ENCODE measurements at regions of chr5 and their contacts with region 1.

Region 1: GRCh38 chr5:74945561-74946165 is 79.5 kb upstream of the FAM169A start:
- DNase-seq: no peak
- H3K4me3 ChIP-seq: no peak overlapping the region
- H3K4me3 Mint-ChIP-seq: no peak overlapping the region
- H3K27ac Mint-ChIP-seq: no peak overlapping the region
- H3K4me1 ChIP-seq: peaks cover 74% of the 10 kb centered on the region
- H3K4me1 Mint-ChIP-seq: peaks cover 58% of the 10 kb centered on the region
- H3K27me3 ChIP-seq: no peaks in the 10 kb centered on the region
- H3K27me3 Mint-ChIP-seq: no peaks in the 10 kb centered on the region
- CTCF ChIP-seq: no peak

Region 2: GRCh38 chr5:74673011-74673790 is 272.5 kb before region 1 on chr5:
- CTCF ChIA-PET with region 1: no interaction called
- POLR2A ChIA-PET with region 1: no interaction called
- intact Hi-C with region 1: loop called (anchors 2 kb)
- DNase-seq: peak in 1 of 2 experiments; percentile 30
- H3K4me3 ChIP-seq: no peak overlapping the region
- H3K4me3 Mint-ChIP-seq: no peak overlapping the region
- H3K27ac Mint-ChIP-seq: no peak overlapping the region
- H3K4me1 ChIP-seq: no peaks in the 10 kb centered on the region; the same call in 1 of the 2 replicates
- H3K4me1 Mint-ChIP-seq: peaks cover 18% of the 10 kb centered on the region
- H3K27me3 ChIP-seq: no peaks in the 10 kb centered on the region
- H3K27me3 Mint-ChIP-seq: no peaks in the 10 kb centered on the region
- CTCF ChIP-seq: peak; percentile 21 to 29

Region 3: DNA sequence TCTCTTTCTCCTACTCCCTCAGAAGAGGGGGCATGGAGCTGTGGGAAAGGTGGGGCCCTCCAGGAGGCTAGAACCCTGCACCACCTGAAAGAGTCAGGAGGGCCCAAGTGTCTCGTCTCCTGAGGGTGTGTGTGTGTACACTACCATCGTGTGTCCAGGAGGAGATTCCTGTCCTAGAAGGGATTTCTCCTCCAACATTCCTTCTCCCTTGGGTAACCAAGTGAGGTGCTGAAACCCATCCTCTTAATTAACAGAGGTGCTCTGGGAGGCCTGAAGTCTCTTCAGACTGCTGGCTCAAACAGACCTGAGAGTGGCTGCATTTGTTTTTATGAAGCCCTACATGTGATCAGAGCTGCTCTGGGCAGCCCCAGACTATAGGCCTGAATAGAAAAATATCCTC is 18.3 kb before region 1 on chr5:
- CTCF ChIA-PET with region 1: interaction called, 6 read pairs
- POLR2A ChIA-PET with region 1: no interaction called
- intact Hi-C with region 1: loop called (anchors 1 kb)
- DNase-seq: no peak
- H3K4me3 ChIP-seq: no peak overlapping the region
- H3K4me3 Mint-ChIP-seq: no peak overlapping the region
- H3K27ac Mint-ChIP-seq: no peak overlapping the region
- H3K4me1 ChIP-seq: no peaks in the 10 kb centered on the region
- H3K4me1 Mint-ChIP-seq: no peaks in the 10 kb centered on the region
- H3K27me3 ChIP-seq: no peaks in the 10 kb centered on the region
- H3K27me3 Mint-ChIP-seq: no peaks in the 10 kb centered on the region
- CTCF ChIP-seq: no peak

Region 4: DNA sequence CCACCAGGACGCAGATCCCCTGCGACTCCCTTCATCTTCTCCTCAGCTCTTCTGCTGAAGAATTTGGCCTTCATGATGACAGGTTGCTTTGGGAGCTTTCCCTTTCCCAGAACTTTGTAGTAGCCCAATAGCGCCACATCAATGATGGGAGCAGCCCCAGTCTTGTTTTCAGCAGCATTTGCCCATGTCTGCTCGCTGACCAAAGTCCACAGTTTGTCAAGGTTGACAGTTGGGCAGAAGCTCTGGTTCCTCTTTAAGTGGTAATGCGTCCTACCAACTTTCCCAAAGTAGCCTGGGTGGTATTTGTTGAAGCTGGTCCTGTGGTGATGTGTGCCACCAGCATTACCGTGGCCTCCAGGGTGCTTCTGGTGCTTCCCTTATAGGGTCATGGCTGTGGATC is 44.5 kb after region 1 on chr5:
- CTCF ChIA-PET with region 1: no interaction called
- POLR2A ChIA-PET with region 1: no interaction called
- intact Hi-C with region 1: no loop called
- DNase-seq: no peak
- H3K4me3 ChIP-seq: no peak overlapping the region
- H3K4me3 Mint-ChIP-seq: no peak overlapping the region
- H3K27ac Mint-ChIP-seq: no peak overlapping the region
- H3K4me1 ChIP-seq: no peaks in the 10 kb centered on the region
- H3K4me1 Mint-ChIP-seq: no peaks in the 10 kb centered on the region
- H3K27me3 ChIP-seq: no peaks in the 10 kb centered on the region
- H3K27me3 Mint-ChIP-seq: no peaks in the 10 kb centered on the region
- CTCF ChIP-seq: no peak